BJ (cell line): ENCODE measurements at regions of chr5 and their contacts with region 1.

Region 1: GRCh38 chr5:132426525-132427138 is 57.1 kb downstream of the SLC22A5 start:
- DNase-seq: peak; percentile 72
- H3K4me3 ChIP-seq: no peak overlapping the region
- H3K27me3 ChIP-seq: no peaks in the 10 kb centered on the region
- CTCF ChIP-seq: peak; percentile 67

Region 2: DNA sequence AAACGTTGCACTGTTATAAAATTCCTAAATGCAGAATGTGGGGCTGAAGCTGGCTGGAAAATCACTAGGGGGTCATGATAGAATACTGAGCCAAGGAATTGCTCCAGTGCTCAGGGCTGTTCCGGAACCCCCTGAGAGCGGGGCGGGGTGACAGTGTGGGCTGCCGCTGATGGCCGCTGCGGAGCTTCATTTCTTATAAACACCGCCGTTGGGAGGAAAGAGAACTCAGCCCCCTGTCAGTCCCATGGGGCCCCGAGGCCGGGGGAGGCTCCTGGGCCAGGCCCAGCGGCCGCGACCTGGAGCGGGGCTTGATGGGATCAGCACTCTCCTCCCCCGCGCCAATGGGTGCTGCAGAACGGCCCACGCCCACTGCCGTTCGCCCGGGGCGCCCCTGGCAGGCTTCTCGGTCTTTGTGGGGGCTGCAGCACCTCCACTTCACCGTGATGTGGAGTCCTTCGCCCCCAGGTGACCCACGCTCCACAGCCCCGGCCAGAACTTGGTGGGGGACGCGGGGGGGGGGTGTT is 69.1 kb after region 1 on chr5:
- CTCF ChIA-PET with region 1: interaction called, 77 read pairs
- POLR2A ChIA-PET with region 1: interaction called, 4 read pairs
- DNase-seq: peak; percentile 57
- H3K4me3 ChIP-seq: peak overlapping the region; percentile 59
- H3K27me3 ChIP-seq: no peaks in the 10 kb centered on the region
- CTCF ChIP-seq: peak; percentile 33